ENCODE measurements at regions of chr6 and their contacts with region 1.

Region 1: DNA sequence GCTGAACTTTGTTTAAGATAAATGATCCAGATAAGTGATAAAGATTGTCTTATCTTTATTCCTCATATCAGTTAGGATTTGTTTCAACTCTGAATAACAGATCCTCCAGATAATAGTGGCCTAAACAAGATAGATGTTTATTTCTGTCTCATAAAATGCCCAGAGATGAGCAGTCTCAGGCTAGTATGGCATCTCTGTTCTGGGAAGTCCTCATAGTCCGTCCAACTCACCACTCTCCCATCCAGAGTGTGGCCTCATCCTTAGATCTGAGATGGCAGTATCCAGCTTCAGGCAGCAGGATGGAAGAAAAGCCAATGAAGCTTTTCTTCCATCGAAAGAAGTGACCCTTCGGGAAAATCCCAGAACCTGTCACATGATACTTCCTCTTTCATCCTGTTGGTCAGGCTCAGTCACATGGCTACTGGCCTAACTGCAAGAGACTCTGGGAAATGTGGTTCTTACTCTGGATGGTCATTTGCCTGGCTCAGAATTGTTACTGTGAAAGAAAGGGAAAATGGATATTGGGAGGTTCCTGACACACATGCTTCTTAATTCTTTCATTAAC is 29.4 kb upstream of the TAGAP start:
- DNase-seq: no peak
- ATAC-seq: no peak
- H3K4me3 Mint-ChIP-seq: peak overlapping the region; percentile 36
- H3K27ac Mint-ChIP-seq: no peak overlapping the region
- H3K4me1 Mint-ChIP-seq: peaks cover 83% of the 10 kb centered on the region
- H3K27me3 Mint-ChIP-seq: no peaks in the 10 kb centered on the region
- CTCF ChIP-seq: no peak

Region 2: DNA sequence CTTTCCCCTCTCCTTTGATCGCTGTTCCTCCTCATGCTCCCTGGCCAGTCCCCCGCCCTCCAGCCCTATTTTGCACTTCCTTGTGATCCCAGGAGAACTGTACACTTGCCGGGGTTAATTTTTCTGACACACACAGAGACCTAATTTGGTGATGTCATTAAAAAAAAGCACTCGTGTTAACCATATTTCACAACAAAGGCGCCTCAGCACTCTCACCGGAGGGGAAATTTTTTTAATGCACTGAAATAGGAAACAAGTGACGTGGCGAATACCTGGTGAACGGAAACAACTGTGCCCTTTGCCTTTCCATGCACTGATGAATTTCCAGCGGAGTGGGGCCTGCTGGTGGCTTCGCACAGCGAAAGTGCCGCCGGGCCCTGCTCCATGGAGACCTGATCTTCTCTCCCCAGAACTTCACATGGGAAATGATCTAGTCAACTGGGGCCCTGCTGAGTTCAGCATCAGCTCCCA is 24.5 kb after region 1 on chr6:
- CTCF ChIA-PET with region 1: interaction called, 29 read pairs
- POLR2A ChIA-PET with region 1: interaction called, 172 read pairs
- intact Hi-C with region 1: no loop called
- DNase-seq: peak; percentile 84
- ATAC-seq: peak; percentile 43
- H3K4me3 Mint-ChIP-seq: peak overlapping the region; percentile 69
- H3K27ac Mint-ChIP-seq: peak overlapping the region; percentile 96
- H3K4me1 Mint-ChIP-seq: peaks cover 93% of the 10 kb centered on the region
- H3K27me3 Mint-ChIP-seq: no peaks in the 10 kb centered on the region
- CTCF ChIP-seq: no peak

Measured in activated CD8-positive, alpha-beta T cell treated with anti-CD3 and anti-CD28 coated beads for 36 hours (primary cell).